ENCODE measurements at regions of chr12 and their contacts with region 1.

Region 1: DNA sequence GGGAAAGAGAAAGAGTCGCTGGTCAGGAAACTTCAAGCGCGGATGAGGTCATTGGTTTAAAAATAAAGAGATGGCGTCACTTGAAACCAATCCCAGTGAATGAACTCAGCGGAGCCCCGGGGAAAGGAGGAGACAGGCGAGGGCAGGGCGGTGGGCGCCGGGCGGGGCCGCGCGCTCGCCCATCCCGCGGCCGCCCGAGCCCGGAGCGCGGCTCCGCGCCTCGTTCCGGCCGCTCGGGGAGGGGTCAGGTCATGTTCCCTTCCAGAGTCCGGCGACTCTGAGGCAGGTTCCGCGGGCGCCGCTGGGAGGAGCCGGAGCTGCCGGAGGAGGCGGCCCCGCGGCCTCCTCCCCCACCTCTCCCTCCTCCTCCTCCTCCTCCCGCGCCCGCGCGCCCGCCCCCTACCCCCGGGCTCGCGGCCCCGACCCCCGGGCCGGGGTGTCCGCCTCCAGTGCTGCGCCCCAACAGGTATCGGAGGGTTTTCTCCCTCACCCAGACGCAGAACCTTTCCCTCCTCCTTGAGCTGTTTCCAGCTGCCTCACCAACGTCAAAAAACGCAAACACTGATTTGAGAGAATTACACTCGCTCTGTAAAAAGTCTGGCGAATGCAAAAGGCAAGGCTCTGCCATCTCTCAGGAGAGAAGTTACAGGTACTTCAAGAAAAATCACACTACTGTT is at the start of gene DUSP16:
- DNase-seq: peak; percentile 90 to 93 (median 91)
- H3K4me3 ChIP-seq: peak within 1 kb of the TSS; percentile 73 to 80
- H3K4me3 Mint-ChIP-seq: peak within 1 kb of the TSS; percentile 92 to 95 (median 92)
- H3K27ac ChIP-seq: peak within 1 kb of the TSS; percentile 99
- H3K27ac Mint-ChIP-seq: peak within 1 kb of the TSS; percentile 95 to 99 (median 99)
- H3K4me1 ChIP-seq: peaks cover 43% of the 10 kb centered on the region
- H3K4me1 Mint-ChIP-seq: peaks cover 25 to 51% (median 37%) of the 10 kb centered on the region in 4 donors
- H3K27me3 ChIP-seq: no peaks in the 10 kb centered on the region
- H3K27me3 Mint-ChIP-seq: no peaks in the 10 kb centered on the region
- total RNA-seq, gene DUSP16: 122 to 125 TPM

Region 2: DNA sequence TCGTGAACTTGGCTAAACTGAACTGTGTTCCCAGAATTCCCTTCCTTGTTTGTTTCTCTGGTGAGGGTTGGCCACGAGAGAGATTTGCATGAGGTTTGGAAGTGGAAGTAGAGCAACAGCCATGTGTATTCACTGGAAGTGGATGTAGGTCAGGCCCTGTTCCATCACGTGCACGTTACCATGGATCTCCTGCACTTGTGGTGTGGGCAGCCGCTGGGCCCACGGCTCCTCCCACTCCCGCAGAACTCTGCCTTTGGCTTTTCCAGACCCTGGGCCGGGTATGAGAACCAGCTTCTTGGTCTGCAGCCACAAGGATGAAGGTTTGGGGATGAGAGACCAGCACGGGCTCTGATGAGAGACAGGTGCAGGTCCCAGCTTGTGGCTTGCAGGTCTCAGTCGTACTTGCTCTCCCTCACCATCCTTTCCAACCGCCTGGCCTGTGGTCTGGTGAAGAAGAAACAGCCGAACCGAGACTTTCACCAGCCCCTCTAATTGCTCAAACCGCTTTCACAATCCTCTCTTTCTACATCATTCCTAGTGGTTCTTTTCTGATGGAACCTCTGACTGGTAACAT is 94.9 kb before region 1 on chr12:
- CTCF ChIA-PET with region 1: interaction called, 5 read pairs
- POLR2A ChIA-PET with region 1: interaction called, 52 read pairs
- intact Hi-C with region 1: no loop called
- DNase-seq: peak; percentile 76 to 88 (median 85)
- H3K4me3 ChIP-seq: peak overlapping the region in 1 of 2 donors; percentile 12
- H3K4me3 Mint-ChIP-seq: peak overlapping the region; percentile 52 to 83 (median 62)
- H3K27ac ChIP-seq: peak overlapping the region; percentile 82
- H3K27ac Mint-ChIP-seq: peak overlapping the region; percentile 98 to 100 (median 99)
- H3K4me1 ChIP-seq: peaks cover 78% of the 10 kb centered on the region
- H3K4me1 Mint-ChIP-seq: peaks cover 55 to 90% (median 76%) of the 10 kb centered on the region in 4 donors
- H3K27me3 ChIP-seq: no peaks in the 10 kb centered on the region
- H3K27me3 Mint-ChIP-seq: no peaks in the 10 kb centered on the region

Region 3: DNA sequence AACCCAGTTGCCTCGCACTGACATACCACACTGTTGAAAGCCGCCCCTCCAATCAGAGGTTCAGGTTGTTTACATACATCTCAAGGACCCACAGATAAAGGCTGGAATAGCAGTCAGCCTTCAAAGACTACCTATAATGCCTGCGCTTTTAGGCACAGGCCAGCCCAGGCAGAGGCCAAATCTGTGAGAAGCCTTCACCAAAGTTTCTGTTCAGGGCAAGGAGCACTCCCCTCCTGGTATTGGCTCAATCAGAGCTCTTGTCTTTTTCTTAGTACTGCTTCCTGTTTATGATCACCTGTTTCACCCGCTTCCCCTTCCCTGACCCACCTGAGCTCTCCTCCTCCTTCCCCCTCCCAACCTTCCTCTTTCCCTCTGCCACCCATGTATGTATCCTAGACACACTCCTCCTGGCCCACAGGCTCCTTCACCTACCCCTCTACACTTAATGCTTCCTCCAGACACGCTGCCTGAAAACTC is 34.9 kb before region 1 on chr12:
- CTCF ChIA-PET with region 1: interaction called, 7 read pairs
- POLR2A ChIA-PET with region 1: interaction called, 13 read pairs
- intact Hi-C with region 1: loop called (anchors 2 kb)
- DNase-seq: peak in 3 of 5 donors; percentile 25 to 43 (median 31)
- H3K4me3 ChIP-seq: no peak overlapping the region
- H3K4me3 Mint-ChIP-seq: peak overlapping the region in 7 of 8 donors; percentile 40 to 80 (median 71)
- H3K27ac ChIP-seq: peak overlapping the region; percentile 56
- H3K27ac Mint-ChIP-seq: peak overlapping the region; percentile 64 to 96 (median 94)
- H3K4me1 ChIP-seq: peaks cover 52% of the 10 kb centered on the region
- H3K4me1 Mint-ChIP-seq: peaks cover 37 to 61% (median 52%) of the 10 kb centered on the region in 4 donors
- H3K27me3 ChIP-seq: no peaks in the 10 kb centered on the region
- H3K27me3 Mint-ChIP-seq: no peaks in the 10 kb centered on the region

Region 4: GRCh38 chr12:12654691-12655460 is 92.2 kb after region 1 on chr12:
- CTCF ChIA-PET with region 1: interaction called, 16 read pairs
- POLR2A ChIA-PET with region 1: interaction called, 11 read pairs
- intact Hi-C with region 1: loop called (anchors 1 kb)
- DNase-seq: no peak
- H3K4me3 ChIP-seq: no peak overlapping the region
- H3K4me3 Mint-ChIP-seq: no peak overlapping the region
- H3K27ac ChIP-seq: no peak overlapping the region
- H3K27ac Mint-ChIP-seq: peak overlapping the region in 2 of 7 donors; percentile 70 to 79
- H3K4me1 ChIP-seq: peaks cover 13% of the 10 kb centered on the region
- H3K4me1 Mint-ChIP-seq: peaks cover 13 to 19% (median 14%) of the 10 kb centered on the region in 4 donors
- H3K27me3 ChIP-seq: no peaks in the 10 kb centered on the region
- H3K27me3 Mint-ChIP-seq: no peaks in the 10 kb centered on the region

Region 5: DNA sequence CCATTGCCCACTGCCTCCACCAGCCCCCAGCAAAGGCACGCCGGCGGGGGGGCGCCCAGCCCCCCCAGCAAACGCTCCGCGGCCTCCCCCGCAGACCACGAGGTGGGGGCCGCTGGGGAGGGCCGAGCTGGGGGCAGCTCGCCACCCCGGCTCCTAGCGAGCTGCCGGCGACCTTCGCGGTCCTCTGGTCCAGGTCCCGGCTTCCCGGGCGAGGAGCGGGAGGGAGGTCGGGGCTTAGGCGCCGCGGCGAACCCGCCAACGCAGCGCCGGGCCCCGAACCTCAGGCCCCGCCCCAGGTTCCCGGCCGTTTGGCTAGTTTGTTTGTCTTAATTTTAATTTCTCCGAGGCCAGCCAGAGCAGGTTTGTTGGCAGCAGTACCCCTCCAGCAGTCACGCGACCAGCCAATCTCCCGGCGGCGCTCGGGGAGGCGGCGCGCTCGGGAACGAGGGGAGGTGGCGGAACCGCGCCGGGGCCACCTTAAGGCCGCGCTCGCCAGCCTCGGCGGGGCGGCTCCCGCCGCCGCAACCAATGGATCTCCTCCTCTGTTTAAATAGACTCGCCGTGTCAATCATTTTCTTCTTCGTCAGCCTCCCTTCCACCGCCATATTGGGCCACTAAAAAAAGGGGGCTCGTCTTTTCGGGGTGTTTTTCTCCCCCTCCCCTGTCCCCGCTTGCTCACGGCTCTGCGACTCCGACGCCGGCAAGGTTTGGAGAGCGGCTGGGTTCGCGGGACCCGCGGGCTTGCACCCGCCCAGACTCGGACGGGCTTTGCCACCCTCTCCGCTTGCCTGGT is 154.3 kb after region 1 on chr12 and contains the start of gene CDKN1B:
- CTCF ChIA-PET with region 1: interaction called, 3 read pairs
- POLR2A ChIA-PET with region 1: interaction called, 73 read pairs
- intact Hi-C with region 1: no loop called
- DNase-seq: peak; percentile 87 to 90 (median 89)
- H3K4me3 ChIP-seq: peak within 1 kb of the TSS; percentile 94 to 99
- H3K4me3 Mint-ChIP-seq: peak within 1 kb of the TSS; percentile 96 to 100 (median 98)
- H3K27ac ChIP-seq: peak within 1 kb of the TSS; percentile 95
- H3K27ac Mint-ChIP-seq: peak within 1 kb of the TSS; percentile 96 to 99 (median 98)
- H3K4me1 ChIP-seq: peaks cover 51% of the 10 kb centered on the region
- H3K4me1 Mint-ChIP-seq: peaks cover 38 to 63% (median 47%) of the 10 kb centered on the region in 4 donors
- H3K27me3 ChIP-seq: no peaks in the 10 kb centered on the region
- H3K27me3 Mint-ChIP-seq: no peaks in the 10 kb centered on the region
- total RNA-seq, gene CDKN1B: 232 to 238 TPM

Measured in CD4-positive, alpha-beta memory T cell (primary cell).